ENCODE measurements at regions of chr6 and their contacts with region 1.

Region 1: DNA sequence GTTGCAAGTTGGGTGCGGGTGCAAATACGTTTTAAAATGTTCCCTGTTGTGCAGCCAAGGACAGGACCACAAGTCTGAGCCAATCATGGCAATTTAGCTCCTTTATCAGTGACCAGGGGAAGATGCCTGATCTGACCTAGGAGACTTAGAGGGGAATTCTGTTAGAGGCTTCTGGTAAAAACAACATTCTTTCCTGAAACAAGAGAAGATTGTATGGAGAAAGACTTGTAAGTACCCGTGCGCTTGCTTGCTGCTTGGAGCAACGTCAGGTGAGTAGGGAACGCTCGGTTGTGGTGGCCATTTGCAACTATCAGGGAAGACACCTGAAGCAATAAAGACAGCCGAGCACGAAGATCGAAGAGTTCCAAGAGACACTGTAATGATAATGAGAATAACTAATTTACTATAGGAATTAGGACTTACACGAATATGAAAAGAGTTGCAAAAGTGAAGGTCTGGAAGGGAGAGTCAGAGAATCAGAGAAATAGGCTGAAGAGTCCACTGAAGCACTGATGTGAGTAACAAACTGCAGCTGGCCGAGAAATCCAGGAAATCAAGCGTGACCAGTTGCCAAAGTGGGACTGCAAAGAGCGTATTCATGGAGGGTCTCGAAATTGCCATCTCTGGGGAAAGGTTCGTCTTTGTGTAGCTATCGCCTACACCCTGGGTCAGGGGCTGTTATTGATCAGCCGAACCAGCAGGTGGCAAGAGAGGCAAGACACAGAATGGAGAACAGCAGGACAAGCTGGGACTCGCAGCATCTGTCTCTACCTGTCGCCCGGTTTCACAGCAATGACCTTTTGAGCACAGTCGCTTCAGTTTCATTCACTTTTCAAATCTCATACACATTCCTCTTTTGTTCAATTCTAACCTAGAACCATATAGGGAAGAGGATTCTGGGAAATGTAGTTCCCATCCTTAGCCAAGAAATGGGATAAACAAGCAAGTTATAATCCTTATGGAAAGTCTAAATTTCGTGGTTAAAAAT is 26.1 kb downstream of the LOC128125822 start:
- DNase-seq: peak; percentile 77
- H3K4me3 Mint-ChIP-seq: peak overlapping the region; percentile 73
- H3K27ac Mint-ChIP-seq: no peak overlapping the region
- H3K4me1 Mint-ChIP-seq: peaks cover 21% of the 10 kb centered on the region
- H3K27me3 Mint-ChIP-seq: peaks cover 6% of the 10 kb centered on the region

Region 2: GRCh38 chr6:63352587-63353285 is 245.6 kb before region 1 on chr6:
- CTCF ChIA-PET with region 1: interaction called, 29 read pairs
- POLR2A ChIA-PET with region 1: interaction called, 3 read pairs
- DNase-seq: peak; percentile 18
- H3K4me3 Mint-ChIP-seq: peak overlapping the region; percentile 44
- H3K27ac Mint-ChIP-seq: peak overlapping the region; percentile 45
- H3K4me1 Mint-ChIP-seq: peaks cover 17% of the 10 kb centered on the region
- H3K27me3 Mint-ChIP-seq: peaks cover 13% of the 10 kb centered on the region

Region 3: DNA sequence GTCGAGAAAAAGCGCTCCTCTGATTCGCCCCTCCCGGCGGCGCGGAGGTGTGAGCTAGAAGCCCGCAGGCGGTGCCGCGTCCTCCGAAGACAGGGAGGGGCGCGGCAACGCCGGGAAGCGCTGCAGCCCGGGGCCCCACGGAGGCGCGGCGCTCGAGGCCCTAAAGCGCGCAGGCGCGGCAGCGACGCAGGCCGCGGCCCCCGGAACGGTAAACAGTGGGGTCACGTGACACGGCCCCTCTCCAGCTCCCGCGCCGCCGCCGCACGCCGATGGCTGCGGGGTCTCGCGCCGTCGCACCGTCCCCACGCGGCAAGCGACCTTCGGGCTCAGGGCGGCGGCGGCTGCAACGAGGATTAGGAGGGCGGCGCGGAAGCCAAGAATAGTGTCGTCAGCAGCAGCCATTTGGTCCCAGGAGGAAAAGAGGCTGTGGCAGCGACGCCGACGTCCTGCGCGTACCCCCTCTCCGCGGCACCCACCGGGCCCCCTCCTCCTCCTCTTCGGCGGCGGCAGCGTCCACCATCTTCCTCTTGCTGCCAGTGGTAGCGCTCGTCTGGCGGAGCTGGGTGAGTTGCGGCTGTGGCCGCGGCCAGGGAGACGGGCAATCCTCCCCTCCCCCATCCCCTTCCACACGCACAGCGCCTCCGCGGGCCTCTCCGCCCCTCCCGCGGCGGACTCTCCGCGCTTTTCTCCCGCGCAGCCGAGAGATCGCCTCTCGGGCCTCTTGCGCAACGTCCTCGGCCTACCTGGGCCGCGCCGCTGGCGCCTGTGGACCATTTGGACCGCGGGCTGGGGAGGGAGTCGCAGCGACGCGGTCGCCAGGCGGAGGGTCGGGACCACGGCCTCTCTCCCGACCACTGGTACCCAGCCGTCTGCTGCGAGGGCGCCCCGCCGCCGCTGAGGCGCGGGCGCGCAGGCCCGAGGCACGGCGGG is 37.5 kb after region 1 on chr6 and contains the start of gene PHF3:
- CTCF ChIA-PET with region 1: interaction called, 17 read pairs
- POLR2A ChIA-PET with region 1: interaction called, 10 read pairs
- DNase-seq: peak; percentile 91
- H3K4me3 Mint-ChIP-seq: peak within 1 kb of the TSS; percentile 99
- H3K27ac Mint-ChIP-seq: peak within 1 kb of the TSS; percentile 97
- H3K4me1 Mint-ChIP-seq: peaks cover 43% of the 10 kb centered on the region
- H3K27me3 Mint-ChIP-seq: peaks cover 4% of the 10 kb centered on the region
- total RNA-seq, gene PHF3: 53.9 to 57.8 TPM

Region 4: DNA sequence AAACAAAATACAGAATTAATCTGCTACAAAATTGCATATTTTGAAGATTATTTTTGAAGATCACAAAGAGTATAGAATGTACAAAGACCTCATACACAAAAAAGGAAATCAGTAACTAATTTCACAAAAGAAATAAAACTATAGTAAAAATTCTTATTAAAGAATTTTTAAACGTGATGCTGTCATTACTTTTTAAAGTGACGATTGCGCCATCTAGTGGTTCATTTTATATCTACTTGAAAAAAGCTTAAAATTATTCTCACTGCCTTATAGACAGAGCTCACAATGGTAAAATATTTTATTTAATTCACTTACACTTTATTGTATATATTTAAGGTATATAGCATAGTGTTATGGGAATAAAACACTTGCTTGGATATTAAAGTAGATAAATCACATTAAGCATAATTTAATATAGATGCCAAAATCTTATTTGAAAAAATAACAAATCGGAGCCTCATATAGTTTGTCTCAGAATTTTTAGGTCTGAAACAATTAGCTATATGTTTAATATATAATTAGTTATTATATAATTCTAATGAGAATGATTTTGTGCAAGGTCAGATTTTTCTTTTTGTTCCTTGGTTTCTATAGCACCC is 166.1 kb after region 1 on chr6:
- CTCF ChIA-PET with region 1: interaction called, 60 read pairs
- POLR2A ChIA-PET with region 1: interaction called, 3 read pairs
- DNase-seq: no peak
- H3K4me3 Mint-ChIP-seq: no peak overlapping the region
- H3K27ac Mint-ChIP-seq: no peak overlapping the region
- H3K4me1 Mint-ChIP-seq: no peaks in the 10 kb centered on the region
- H3K27me3 Mint-ChIP-seq: peaks cover 14% of the 10 kb centered on the region

Measured in activated CD4-positive, alpha-beta memory T cell treated with anti-CD3 and anti-CD28 coated beads, Interleukin-2, amount 10 ng/mL, durations not matched to agents 7 days and 5 days (primary cell).